ENCODE measurements at regions of chr22 and their contacts with region 1.

Region 1: DNA sequence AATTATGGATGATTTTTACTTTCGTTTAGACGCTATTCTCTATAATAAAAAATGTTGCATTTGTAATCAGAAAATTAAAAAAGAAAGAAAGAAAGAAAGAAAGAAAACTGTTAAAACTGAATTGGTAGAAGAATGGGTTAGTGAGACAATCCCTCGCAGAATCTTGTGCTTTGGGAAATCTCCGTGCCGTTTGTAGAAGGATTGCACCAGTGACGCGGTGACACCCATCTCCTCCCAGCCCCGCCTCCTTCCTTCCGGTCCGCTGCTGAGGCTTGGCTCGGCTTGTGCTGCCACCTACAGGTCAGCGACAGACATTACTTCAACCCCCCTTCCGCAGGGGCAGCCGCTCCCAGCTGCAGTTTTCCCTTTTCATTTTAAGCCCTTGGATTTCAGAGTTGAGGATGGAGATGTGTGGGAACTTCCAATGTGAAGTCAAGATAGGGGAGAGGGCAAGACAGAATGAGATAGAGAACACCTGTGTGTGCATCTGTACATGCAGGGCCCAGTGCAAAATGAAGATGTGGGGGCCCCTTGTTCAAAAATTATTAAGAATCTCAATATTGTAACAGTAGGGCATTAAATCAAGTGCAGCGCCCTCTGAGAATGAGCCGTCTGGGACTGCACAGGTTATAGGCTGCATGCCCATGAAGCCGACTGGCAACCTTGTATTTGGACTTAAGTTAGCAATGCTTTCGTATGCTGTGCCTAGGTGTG is 41.1 kb downstream of the TST start:
- DNase-seq: peak; percentile 76
- ATAC-seq: peak; percentile 99
- H3K4me3 ChIP-seq: peak overlapping the region; percentile 36
- H3K27ac ChIP-seq: no peak overlapping the region
- H3K4me1 ChIP-seq: no peaks in the 10 kb centered on the region
- H3K27me3 ChIP-seq: peaks cover 22% of the 10 kb centered on the region
- CTCF ChIP-seq: peak; percentile 97
- POLR2A ChIP-seq: no peak
- RAD21 ChIP-seq: peak; percentile 90

Region 2: DNA sequence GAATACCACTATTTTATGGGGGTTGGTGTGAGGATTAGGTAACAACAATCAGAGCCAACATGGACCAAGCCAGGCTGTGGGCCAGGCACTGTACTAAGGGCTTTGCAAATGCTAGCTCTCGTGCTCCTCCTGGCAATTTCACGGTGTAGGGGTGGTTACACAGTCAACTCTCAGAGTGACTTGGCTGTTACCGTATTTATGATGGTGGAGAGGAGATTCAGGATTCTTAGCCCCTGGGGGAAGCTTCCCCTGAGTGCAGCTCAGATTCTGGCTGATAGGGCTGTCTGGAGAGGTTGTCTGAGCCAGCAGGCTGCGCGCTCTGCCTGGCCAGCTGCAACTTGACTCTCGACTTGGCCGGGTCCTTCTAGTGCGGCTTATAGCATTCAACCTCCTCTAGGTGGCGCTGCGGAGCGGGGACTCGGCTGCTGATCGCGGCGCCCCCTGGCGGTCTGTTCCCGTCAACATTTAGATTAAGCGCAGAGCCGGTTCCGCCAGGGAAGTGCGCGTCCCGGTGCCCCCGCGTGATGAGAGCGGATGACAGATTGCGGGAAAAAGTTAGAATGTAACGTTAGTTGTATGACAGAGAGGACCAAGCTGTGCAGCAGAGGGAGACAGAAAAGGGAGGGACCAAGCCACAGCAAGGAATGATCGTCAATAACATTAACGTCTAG is 121.8 kb before region 1 on chr22:
- CTCF ChIA-PET with region 1: interaction called, 7 read pairs
- POLR2A ChIA-PET with region 1: no interaction called
- dilution Hi-C with region 1: no loop called
- in situ Hi-C with region 1: no loop called
- intact Hi-C with region 1: loop called (anchors 1 kb)
- DNase-seq: peak; percentile 79
- ATAC-seq: peak; percentile 98
- H3K4me3 ChIP-seq: no peak overlapping the region
- H3K27ac ChIP-seq: no peak overlapping the region
- H3K4me1 ChIP-seq: no peaks in the 10 kb centered on the region
- H3K27me3 ChIP-seq: peaks cover 26% of the 10 kb centered on the region
- CTCF ChIP-seq: peak; percentile 100; the same call in 1 of the 2 replicates
- POLR2A ChIP-seq: no peak
- RAD21 ChIP-seq: peak; percentile 80

Region 3: DNA sequence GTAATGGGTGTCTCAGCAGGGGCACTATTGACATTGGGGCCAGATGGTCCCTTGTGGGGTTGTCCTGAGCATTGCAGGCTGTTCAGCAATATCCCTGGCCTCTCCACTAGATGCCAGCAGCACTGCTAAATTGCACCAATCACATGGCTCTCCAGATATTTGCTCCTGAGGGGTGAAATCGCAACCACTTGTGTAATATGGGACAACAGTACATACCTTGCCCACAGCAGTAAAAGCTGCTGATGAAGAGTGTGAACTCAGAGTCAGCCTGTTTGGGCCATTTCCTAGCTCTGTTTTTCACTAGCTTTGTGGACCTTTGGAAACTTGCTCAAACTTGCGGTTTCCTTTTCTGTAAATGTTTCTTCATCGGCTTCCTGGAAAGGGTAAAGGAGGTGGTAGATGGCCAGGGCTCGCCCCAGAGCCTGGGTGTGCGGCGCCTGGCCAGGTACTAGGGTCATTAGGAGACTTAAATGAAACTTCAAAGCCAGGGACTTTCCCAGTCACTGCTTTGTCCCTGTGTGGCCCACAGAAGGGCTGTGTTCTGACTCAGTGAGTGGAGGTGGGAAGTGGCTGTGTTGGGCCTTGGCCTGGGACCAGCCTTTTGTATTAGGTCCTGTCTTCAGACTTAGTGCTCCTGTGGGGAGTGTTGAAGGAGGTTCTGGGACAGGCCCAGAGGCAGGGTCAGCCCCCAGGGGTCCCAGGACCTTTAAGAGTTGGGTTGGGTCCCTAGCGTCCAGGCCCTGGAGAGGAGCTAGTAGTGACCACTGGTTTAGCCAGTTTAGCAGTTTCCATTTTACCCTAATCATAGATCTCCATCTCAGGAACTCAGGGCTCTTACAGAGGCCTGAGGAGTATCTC is 104.2 kb before region 1 on chr22:
- CTCF ChIA-PET with region 1: no interaction called
- POLR2A ChIA-PET with region 1: no interaction called
- dilution Hi-C with region 1: no loop called
- in situ Hi-C with region 1: no loop called
- intact Hi-C with region 1: loop called (anchors 1 kb)
- DNase-seq: peak; percentile 45
- ATAC-seq: peak; percentile 97
- H3K4me3 ChIP-seq: no peak overlapping the region
- H3K27ac ChIP-seq: no peak overlapping the region
- H3K4me1 ChIP-seq: no peaks in the 10 kb centered on the region
- H3K27me3 ChIP-seq: peaks cover 26% of the 10 kb centered on the region
- CTCF ChIP-seq: peak; percentile 47
- POLR2A ChIP-seq: no peak
- RAD21 ChIP-seq: peak; percentile 48

Region 4: GRCh38 chr22:36936362-36937071 is 41.6 kb before region 1 on chr22:
- CTCF ChIA-PET with region 1: no interaction called
- POLR2A ChIA-PET with region 1: no interaction called
- dilution Hi-C with region 1: no loop called
- in situ Hi-C with region 1: no loop called
- intact Hi-C with region 1: no loop called
- DNase-seq: no peak
- ATAC-seq: no peak
- H3K4me3 ChIP-seq: no peak overlapping the region
- H3K27ac ChIP-seq: no peak overlapping the region
- H3K4me1 ChIP-seq: no peaks in the 10 kb centered on the region
- H3K27me3 ChIP-seq: peaks cover 38% of the 10 kb centered on the region
- CTCF ChIP-seq: no peak
- POLR2A ChIP-seq: no peak
- RAD21 ChIP-seq: no peak

Measured in IMR-90 (cell line).